Calu3 (cell line): ENCODE measurements at regions of chr16 and their contacts with region 1.

Region 1: DNA sequence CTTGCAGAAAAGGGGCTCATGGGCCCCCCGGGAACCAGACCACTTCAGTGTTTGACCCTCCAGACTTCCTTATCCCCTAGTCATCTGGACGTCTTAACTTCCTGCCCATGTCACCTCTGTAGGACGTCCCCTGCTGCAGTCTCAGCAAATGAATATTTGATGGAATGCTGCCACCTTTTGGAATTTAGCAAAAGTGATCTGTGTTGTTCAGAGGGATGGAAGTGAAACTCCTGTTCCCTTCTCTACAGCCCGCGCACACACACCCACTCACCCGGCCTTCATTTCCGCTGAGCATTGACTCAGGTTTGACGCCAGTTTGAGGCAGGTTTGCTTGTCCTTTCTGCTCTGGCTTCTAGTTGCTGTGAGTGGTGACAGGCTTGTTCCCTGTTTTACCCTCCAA is 507.2 kb upstream of the EEF2KMT start:
- DNase-seq: peak; percentile 49
- H3K4me3 Mint-ChIP-seq: no peak overlapping the region
- H3K27ac Mint-ChIP-seq: no peak overlapping the region
- H3K4me1 Mint-ChIP-seq: no peaks in the 10 kb centered on the region
- H3K27me3 Mint-ChIP-seq: peaks cover 7% of the 10 kb centered on the region
- CTCF ChIP-seq: peak; percentile 57

Region 2: GRCh38 chr16:5234295-5235050 is 370.3 kb before region 1 on chr16:
- CTCF ChIA-PET with region 1: no interaction called
- intact Hi-C with region 1: loop called (anchors 5 kb)
- DNase-seq: no peak
- H3K4me3 Mint-ChIP-seq: no peak overlapping the region
- H3K27ac Mint-ChIP-seq: no peak overlapping the region
- H3K4me1 Mint-ChIP-seq: no peaks in the 10 kb centered on the region
- H3K27me3 Mint-ChIP-seq: peaks cover 63% of the 10 kb centered on the region
- CTCF ChIP-seq: no peak

Region 3: GRCh38 chr16:5502467-5502869 is 102.3 kb before region 1 on chr16:
- CTCF ChIA-PET with region 1: no interaction called
- intact Hi-C with region 1: loop called (anchors 2 kb)
- DNase-seq: peak; percentile 46
- H3K4me3 Mint-ChIP-seq: no peak overlapping the region
- H3K27ac Mint-ChIP-seq: no peak overlapping the region
- H3K4me1 Mint-ChIP-seq: no peaks in the 10 kb centered on the region
- H3K27me3 Mint-ChIP-seq: peaks cover 72% of the 10 kb centered on the region
- CTCF ChIP-seq: peak; percentile 45